GM10248 (cell line): ENCODE measurements at regions of chr16 and their contacts with region 1.

Region 1: DNA sequence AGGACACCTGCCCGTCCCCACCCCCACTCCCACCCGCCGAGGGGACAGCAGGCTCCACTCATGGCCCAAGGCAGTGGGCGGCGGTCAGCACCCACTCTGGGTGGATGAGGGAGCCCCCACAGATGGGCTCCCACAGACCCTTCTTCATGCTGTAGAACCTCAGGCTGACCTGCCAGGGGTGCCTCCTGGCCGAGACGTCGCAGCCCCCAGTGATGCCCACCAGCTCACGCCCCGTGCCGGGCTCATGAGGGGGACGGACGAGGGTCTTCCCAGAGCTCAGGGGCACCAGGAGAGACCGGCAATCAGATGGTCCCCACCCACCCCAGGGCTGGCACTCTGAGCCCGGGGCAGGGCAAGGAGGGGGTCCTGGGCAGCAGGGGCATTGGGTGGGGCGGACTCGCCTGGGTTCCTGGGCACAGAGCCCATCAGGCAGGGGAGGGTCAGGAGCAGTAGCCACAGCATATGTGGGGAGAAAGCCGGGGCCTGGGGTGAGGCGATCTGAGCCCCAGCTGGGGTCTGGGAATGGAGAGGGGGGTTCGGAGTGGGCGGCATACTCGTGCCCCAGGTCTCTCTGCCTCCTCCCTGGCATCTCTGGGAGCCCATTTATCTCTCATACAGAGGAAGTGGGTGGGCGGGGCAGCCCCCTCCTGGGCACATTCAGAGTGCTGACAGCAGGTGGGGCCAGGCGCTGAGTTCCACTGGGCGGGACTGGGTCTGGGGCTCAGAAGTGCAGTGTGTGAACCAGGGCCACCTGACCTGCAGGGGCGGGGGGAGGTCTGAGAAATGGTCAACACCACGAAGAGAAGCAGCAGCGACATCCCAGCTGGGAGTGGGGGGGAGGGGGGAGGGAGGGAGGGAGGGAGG is 20.6 kb upstream of the UBE2I start:
- DNase-seq: no peak
- CTCF ChIP-seq: no peak

Region 2: GRCh38 chr16:1300664-1301476 is 12.0 kb after region 1 on chr16:
- CTCF ChIA-PET with region 1: interaction called, 13 read pairs
- POLR2A ChIA-PET with region 1: no interaction called
- DNase-seq: peak; percentile 88
- CTCF ChIP-seq: peak; percentile 93